GM10248 (cell line): ENCODE measurements at regions of chr10 and their contacts with region 1.

Region 1: DNA sequence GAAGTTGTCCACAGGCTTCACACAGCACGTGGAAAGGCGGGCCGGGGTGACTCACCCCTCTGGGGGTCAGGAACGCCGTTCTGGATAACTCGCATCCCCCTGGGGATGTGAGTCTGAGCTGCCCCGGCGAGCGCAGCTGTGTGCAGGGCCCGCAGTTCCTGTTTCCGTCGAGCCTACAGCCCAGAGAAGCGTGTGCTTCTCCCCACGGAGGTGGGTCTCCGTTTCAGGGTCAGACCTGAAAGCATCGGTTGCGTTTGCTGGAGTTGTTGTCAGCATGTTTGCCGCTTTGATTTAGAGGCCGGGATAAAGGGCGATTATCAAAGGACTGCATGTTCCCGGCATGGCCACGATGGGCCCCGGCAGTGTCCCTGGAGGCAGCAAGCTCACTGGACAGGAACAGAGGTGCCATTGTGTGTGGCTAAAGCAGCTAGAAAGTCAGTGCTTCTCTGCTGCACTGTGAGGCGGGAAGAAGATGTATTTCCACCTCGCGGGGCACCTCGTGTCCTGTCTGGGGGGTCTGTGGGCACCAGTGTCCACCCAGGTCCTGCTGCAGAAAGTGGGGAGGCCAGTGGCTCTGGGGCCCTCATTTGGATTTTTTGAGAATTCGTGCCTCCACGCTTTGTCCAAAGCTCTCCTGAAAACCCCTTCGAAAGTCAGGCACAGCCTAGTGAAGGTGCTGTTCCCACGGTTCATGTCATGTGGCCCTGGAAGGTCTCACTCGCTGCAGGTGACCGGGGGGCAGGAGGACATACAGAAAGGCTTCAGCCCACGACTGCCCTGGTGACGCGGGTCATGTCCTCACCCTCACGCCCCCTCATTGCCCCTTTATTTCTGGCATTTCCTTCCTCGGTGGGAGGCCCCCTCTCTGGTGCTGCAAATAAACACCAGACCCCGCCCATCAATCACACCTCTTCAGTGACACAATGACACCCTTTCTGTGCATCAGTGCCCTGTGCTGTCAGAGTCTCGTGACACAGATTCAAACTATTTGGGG is 27.4 kb upstream of the GDI2 start:
- DNase-seq: peak; percentile 83
- CTCF ChIP-seq: no peak

Region 2: DNA sequence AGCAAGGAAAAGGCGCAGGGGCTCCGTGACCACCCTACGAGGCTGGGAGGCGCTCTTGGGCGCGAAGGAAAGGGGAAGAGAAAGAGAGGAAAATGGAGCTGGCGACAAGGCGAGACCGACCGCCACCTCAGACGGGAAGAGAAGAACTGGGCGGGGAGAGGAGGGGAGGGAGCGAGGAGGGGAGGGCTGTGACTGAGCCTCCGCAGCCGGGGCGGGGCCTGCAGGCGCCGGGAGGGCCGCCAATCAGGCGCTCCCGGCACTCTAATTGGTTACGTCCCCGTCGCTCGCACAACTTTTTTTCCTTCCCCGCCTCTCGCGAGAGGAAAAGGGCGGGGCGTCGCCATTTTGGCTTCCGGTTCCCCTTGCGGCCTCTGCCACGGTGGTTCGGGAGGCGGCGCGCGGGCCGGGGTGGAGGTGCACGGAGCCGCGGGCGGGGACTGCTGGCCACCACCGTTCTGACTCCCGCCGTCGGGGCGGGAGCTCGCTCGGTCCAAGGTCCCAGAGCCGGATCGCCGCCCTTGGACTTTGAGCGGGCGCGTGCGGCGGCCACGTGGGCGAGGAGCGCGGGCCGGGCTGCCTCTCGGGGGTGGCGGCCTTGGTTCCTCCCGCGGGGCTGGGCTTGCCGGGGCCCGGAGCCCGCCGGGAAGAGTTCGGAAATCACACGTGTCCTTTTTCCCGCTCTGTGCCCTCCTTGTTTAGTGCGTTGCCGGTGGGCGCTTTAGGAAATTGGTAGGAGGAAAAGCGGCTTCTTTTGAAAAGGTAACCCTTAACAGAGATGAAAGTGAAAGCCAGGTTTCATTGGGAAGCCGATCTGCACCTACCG is 27.1 kb before region 1 on chr10 and contains the start of gene GDI2:
- CTCF ChIA-PET with region 1: interaction called, 7 read pairs
- POLR2A ChIA-PET with region 1: interaction called, 12 read pairs
- DNase-seq: peak; percentile 98
- CTCF ChIP-seq: no peak

Region 3: DNA sequence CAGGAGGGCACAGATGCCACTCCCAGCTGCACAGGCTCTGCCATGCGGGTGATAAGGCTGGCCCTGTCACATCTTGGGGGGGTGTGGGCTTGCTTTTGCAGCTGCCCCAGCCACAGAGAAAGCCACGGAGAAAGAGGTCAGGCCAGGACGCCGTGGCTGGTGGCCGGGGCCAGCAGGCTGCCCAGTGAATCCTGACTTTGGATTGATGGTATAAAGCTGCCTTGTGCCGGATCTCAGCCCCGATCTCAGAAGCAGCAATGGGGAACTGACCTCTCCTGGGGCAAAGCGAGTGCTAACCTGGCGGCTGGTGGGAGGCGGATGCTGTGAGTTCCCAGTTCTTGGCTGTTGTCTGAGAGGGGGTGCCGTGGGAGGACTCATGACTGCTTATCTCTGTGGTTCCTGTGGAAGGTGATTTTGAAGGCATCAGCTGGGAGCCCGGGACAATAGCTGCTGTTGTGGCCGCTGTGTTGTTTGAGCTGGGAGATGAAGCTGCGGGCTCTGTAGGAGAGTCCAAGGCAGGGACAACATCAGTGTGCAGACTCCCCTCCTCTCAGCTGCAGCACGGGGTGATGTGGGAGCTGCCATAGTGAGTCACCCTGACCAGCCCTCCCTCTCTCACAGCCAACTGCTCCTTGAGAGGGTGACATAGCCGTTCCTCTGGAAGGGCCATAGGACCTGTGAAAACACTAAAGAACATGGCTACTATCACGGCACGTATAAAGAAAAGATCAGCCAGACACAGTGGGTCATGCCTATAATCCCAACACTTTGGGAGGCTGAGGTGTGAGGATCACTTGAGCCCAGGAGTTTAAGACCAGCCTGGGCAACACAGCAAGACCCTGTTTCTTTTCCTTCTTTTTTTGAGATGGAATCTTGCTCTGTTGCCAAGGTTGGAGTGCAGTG is 119.7 kb after region 1 on chr10:
- CTCF ChIA-PET with region 1: no interaction called
- POLR2A ChIA-PET with region 1: no interaction called
- DNase-seq: no peak
- CTCF ChIP-seq: no peak